ENCODE measurements at regions of chr20 and their contacts with region 1.

Region 1: DNA sequence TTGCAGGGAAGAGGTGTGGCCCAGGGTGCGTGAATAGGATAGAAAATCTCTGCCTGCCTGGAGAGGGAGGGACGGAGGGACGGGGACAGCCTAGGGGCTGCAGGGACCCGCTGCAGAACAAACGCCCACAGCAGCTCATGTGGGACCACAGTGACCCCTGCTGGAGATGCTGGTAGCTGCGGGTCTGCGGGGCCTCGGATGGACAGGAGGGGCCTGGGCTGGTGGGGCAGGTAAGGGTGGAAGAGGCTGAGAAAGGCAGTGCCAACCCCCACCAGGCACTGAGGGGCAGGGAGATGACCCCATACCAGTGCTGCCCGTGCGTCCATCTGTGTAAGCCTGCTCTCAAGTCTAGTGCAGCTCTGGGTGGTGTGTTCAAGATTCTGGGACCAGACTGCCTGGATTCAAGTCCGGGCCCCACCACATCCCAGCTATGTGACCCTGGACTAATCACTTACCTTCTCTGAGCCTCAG is 39.4 kb downstream of the KIAA1755 start:
- DNase-seq: peak; percentile 23 to 89 (median 64)
- ATAC-seq: peak; percentile 56 to 84 (median 82)
- H3K4me3 ChIP-seq: no peak overlapping the region
- H3K27ac ChIP-seq: no peak overlapping the region
- H3K4me1 ChIP-seq: no peaks in the 10 kb centered on the region
- H3K27me3 ChIP-seq: no peaks in the 10 kb centered on the region
- CTCF ChIP-seq: peak; percentile 63 to 82 (median 80)

Region 2: GRCh38 chr20:38057351-38057972 is 163.7 kb before region 1 on chr20:
- intact Hi-C with region 1: loop called in 2 of 3 experiments (anchors 5 kb)
- DNase-seq: peak; percentile 57 to 96 (median 78)
- ATAC-seq: peak; percentile 77 to 94 (median 90)
- H3K4me3 ChIP-seq: no peak overlapping the region
- H3K27ac ChIP-seq: no peak overlapping the region
- H3K4me1 ChIP-seq: peaks cover 0 to 8% (median 0%) of the 10 kb centered on the region in 3 donors
- H3K27me3 ChIP-seq: no peaks in the 10 kb centered on the region
- CTCF ChIP-seq: peak; percentile 69 to 92 (median 78)